CD4-positive, alpha-beta T cell (primary cell): ENCODE measurements at regions of chr1 and their contacts with region 1.

Region 1: DNA sequence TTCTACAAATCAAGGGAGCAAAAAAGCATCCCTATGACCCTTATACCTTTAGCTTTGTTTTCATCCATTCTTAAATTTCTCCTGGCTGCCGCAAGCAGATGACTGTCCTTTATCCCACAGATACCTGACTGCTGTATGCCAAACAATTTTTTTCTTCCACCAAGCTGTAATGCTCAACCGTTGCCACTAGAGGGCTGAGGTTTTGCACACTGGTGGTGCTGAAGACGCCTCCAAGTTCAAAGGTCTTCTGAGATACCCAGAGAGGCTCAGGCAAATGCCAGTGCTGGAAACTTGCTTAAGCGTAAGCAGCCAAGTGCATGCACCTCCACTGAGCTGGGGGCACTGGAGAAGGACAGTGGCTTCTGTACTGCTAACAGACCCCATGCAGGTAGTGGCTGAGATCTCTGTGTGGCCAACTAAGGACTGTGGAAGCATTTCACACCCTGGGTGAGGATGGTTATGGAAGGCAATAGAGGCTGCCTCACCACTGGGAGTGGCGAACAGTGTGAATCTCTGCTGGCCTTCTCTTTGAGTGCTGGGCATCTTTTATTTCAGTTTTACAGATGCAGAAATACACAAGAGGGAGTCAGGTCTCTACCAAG is 28.5 kb downstream of the CNIH3 start:
- DNase-seq: peak; percentile 13 to 78 (median 42)
- ATAC-seq: peak; percentile 85
- H3K4me3 ChIP-seq: no peak overlapping the region
- H3K4me3 Mint-ChIP-seq: no peak overlapping the region
- H3K27ac ChIP-seq: no peak overlapping the region
- H3K27ac Mint-ChIP-seq: no peak overlapping the region
- H3K4me1 ChIP-seq: peaks cover 3% of the 10 kb centered on the region
- H3K4me1 Mint-ChIP-seq: peaks cover under 1% of the 10 kb centered on the region
- H3K27me3 ChIP-seq: no peaks in the 10 kb centered on the region
- H3K27me3 Mint-ChIP-seq: peaks cover 4% of the 10 kb centered on the region
- CTCF ChIP-seq: peak; percentile 84

Region 2: DNA sequence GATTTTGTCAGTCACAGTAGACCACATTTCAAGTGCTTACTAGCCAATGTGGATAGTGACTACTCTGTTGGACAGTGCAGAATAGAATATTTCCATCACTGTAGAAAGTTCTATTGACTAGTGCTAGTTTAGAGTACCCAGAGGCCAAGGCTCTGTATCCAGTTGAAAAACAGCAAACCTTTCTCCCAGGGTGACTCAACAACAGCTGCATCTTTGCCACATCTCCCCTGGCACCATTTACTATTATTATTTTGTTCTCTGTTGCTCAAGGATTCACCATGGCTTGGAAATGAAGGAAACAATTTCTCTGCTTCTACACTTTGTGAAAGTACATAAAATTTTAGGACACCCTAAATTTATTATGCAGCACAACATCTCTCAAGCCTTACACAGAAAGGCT is 124.8 kb before region 1 on chr1:
- CTCF ChIA-PET with region 1: interaction called, 3 read pairs
- POLR2A ChIA-PET with region 1: no interaction called
- intact Hi-C with region 1: loop called in 1 of 2 experiments (anchors 5 kb)
- DNase-seq: no peak
- ATAC-seq: no peak
- H3K4me3 ChIP-seq: no peak overlapping the region
- H3K4me3 Mint-ChIP-seq: no peak overlapping the region
- H3K27ac ChIP-seq: no peak overlapping the region
- H3K27ac Mint-ChIP-seq: no peak overlapping the region
- H3K4me1 ChIP-seq: no peaks in the 10 kb centered on the region
- H3K4me1 Mint-ChIP-seq: no peaks in the 10 kb centered on the region
- H3K27me3 ChIP-seq: no peaks in the 10 kb centered on the region
- H3K27me3 Mint-ChIP-seq: no peaks in the 10 kb centered on the region
- CTCF ChIP-seq: no peak

Region 3: DNA sequence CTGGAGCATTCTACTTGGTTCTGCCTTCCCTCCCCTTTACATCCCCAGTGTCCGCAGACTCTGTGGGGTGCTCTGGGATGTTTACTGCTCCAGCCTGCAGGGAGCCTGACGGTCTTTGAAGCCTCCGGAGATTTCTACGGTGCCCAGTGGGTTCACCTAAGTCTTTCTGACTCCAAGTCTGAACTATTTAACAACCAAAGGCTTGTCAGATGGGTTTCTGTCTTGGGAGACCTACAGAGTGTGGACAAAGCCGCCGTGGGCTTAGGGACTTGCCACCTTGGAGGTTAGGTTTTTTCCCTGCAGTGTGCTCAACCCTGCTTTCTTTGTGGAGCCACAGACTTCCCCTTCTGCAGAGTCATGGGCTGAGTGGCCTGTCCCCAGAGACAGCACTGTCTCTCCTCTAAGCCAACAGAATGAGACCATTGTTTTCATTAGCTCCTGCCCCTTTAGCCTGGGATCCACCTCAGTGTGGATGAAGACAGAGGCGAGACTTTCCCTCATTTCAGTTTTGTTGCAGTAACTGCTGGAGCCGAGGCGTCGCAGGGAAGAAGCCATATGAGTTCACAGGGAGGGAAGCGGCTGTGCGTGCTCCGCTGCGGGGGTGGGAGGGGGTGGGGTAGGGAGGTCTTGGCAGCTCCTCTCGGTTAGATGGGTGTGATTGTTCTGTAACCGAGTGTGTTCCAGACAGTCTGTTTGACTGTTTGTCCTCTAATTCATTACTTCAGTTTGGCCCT is 92.1 kb after region 1 on chr1:
- CTCF ChIA-PET with region 1: no interaction called
- POLR2A ChIA-PET with region 1: no interaction called
- intact Hi-C with region 1: no loop called
- DNase-seq: no peak
- ATAC-seq: no peak
- H3K4me3 ChIP-seq: no peak overlapping the region
- H3K4me3 Mint-ChIP-seq: no peak overlapping the region
- H3K27ac ChIP-seq: no peak overlapping the region
- H3K27ac Mint-ChIP-seq: no peak overlapping the region
- H3K4me1 ChIP-seq: peaks cover 12% of the 10 kb centered on the region
- H3K4me1 Mint-ChIP-seq: peaks cover 19% of the 10 kb centered on the region
- H3K27me3 ChIP-seq: no peaks in the 10 kb centered on the region
- H3K27me3 Mint-ChIP-seq: no peaks in the 10 kb centered on the region
- CTCF ChIP-seq: no peak

Region 4: GRCh38 chr1:224922404-224923164 is 277.9 kb after region 1 on chr1:
- CTCF ChIA-PET with region 1: no interaction called
- POLR2A ChIA-PET with region 1: no interaction called
- intact Hi-C with region 1: no loop called
- DNase-seq: peak in 4 of 14 experiments; percentile 4 to 23 (median 16)
- ATAC-seq: no peak
- H3K4me3 ChIP-seq: no peak overlapping the region
- H3K4me3 Mint-ChIP-seq: no peak overlapping the region
- H3K27ac ChIP-seq: no peak overlapping the region
- H3K27ac Mint-ChIP-seq: no peak overlapping the region
- H3K4me1 ChIP-seq: no peaks in the 10 kb centered on the region
- H3K4me1 Mint-ChIP-seq: no peaks in the 10 kb centered on the region
- H3K27me3 ChIP-seq: no peaks in the 10 kb centered on the region
- H3K27me3 Mint-ChIP-seq: peaks cover 29% of the 10 kb centered on the region
- CTCF ChIP-seq: peak; percentile 58